Left ventricle myocardium inferior (tissue), 1 donor: ENCODE measurements at regions of chr1 and their contacts with region 1.

Region 1: GRCh38 chr1:211654838-211655787 is 20.3 kb downstream of the NEK2 start:
- DNase-seq: peak; percentile 88
- H3K4me3 ChIP-seq: peak overlapping the region; percentile 32
- H3K27ac ChIP-seq: no peak overlapping the region
- H3K4me1 ChIP-seq: no peaks in the 10 kb centered on the region
- H3K27me3 ChIP-seq: peaks cover 5% of the 10 kb centered on the region
- CTCF ChIP-seq: peak; percentile 96

Region 2: DNA sequence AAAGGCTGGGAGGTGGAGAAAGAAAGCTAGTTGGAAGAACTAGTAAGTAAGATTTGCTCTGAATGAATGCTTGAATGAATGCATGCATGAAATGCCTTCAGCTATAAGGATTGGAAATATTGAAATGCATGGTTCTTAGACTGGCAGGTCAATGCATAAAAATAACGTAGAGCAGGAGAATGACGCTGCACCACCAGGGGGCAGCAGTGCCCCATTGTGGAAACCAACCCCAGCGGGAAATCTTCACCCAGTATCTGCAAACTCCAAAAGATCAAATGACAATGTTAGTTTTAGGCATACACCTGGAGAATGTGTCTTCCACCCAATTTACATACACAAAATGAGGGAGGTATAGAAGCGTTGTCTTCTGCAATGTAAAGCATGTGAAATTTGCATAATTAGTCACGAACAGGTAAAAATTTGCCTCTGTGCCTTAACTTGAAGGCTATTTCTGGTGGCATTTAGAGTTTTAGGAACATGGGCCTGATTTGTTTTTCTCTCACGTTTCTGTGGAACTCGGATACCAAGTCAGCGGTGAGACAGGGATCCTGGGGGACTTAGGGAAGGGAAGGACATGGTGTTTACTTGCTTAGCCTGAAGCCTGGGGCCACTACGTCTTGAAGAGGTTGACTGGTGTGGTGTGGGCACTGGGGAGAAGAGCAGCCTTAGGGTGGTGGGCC is 1247.8 kb before region 1 on chr1:
- intact Hi-C with region 1: loop called (anchors 5 kb)
- DNase-seq: peak; percentile 57
- H3K4me3 ChIP-seq: no peak overlapping the region
- H3K27ac ChIP-seq: no peak overlapping the region
- H3K4me1 ChIP-seq: no peaks in the 10 kb centered on the region
- H3K27me3 ChIP-seq: no peaks in the 10 kb centered on the region
- CTCF ChIP-seq: peak; percentile 96

Region 3: GRCh38 chr1:211514030-211514754 is 140.9 kb before region 1 on chr1:
- intact Hi-C with region 1: loop called (anchors 10 kb)
- DNase-seq: peak; percentile 69
- H3K4me3 ChIP-seq: no peak overlapping the region
- H3K27ac ChIP-seq: no peak overlapping the region
- H3K4me1 ChIP-seq: peaks cover 13% of the 10 kb centered on the region
- H3K27me3 ChIP-seq: no peaks in the 10 kb centered on the region
- CTCF ChIP-seq: peak; percentile 83

Region 4: DNA sequence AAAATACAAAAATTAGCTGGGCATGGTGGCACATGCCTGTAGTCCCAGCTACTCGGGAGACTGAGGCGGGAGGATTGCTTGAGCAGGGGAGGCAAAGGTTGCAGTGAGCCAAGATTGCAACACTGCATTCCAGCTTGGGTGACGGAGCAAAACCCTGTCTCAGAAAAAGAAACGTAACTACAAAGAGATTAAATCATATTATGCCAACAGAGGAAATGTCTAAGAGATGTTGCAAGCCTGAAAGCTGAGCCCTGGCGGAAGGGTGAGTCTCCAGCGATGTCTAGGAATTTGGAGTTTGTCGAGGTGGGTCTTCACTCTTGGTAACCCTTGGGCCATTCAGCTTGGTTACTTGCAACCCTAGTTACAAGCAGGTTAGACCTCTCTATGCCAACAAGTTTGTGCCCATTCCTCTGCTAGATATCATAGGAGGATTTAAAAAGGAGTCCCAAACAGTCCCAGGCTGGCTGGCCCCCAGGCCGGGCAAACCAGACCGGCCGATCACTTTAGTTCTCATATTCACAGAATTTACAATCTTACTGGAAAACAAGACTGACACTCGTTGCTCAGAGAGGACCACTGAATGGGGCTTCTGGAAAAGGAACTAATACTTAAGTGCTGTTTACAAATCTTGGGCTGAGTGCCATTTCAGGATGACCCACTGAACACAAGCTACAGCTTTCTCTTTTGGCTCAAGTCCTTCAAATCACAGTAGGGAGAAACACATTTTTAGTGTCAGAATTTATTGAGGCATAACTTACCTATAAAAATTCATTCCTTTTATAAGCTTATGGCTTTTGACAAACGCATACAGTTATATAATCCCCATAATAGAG is 103.3 kb before region 1 on chr1:
- intact Hi-C with region 1: no loop called
- DNase-seq: no peak
- H3K4me3 ChIP-seq: no peak overlapping the region
- H3K27ac ChIP-seq: no peak overlapping the region
- H3K4me1 ChIP-seq: peaks cover 19% of the 10 kb centered on the region
- H3K27me3 ChIP-seq: no peaks in the 10 kb centered on the region
- CTCF ChIP-seq: no peak

Region 5: DNA sequence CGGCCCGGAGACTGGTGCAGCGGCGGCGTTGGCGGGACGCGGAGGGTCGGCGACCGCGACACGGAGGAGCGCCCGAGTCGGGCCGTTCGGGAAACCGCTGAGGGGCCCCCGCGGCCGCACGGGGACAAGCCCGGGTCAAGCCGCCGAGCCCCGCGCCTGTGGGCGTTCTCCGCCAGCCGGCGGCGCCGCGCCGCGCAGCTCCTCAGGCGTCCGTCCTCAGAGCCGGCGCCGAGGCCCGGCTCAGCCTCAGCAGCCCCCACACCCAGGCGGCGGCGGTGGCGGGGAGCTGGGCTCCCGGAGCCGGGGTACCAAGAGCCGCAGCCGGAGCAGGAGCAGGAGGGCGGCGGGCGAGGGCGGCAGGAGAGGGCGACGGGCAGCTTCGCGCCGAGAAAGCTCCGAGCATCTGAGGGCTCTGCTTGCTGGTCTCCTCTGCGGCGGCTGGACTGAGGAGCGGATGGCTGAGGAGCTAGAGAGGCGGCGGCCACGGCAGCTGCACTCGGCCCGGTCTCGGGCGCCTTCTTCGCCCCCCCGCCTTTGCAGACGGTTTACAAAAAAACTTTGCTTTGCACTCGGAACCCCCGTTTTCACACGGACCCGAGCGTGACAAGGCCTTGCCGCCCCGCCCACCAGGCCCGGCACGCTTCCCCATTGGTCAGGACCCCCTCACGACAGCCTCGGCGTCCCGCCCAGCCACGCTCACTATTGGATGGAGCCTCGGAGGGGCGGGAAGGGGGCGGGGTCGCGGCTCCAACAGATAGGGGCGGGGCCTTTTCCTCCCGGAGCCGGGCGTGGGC is 76.3 kb before region 1 on chr1 and contains the start of gene SLC30A1:
- intact Hi-C with region 1: loop called (anchors 5 kb)
- DNase-seq: peak; percentile 100
- H3K4me3 ChIP-seq: peak within 1 kb of the TSS; percentile 81
- H3K27ac ChIP-seq: peak within 1 kb of the TSS; percentile 99
- H3K4me1 ChIP-seq: peaks cover 71% of the 10 kb centered on the region
- H3K27me3 ChIP-seq: no peaks in the 10 kb centered on the region
- CTCF ChIP-seq: no peak
- total RNA-seq, gene SLC30A1: 11.5 TPM

Region 6: DNA sequence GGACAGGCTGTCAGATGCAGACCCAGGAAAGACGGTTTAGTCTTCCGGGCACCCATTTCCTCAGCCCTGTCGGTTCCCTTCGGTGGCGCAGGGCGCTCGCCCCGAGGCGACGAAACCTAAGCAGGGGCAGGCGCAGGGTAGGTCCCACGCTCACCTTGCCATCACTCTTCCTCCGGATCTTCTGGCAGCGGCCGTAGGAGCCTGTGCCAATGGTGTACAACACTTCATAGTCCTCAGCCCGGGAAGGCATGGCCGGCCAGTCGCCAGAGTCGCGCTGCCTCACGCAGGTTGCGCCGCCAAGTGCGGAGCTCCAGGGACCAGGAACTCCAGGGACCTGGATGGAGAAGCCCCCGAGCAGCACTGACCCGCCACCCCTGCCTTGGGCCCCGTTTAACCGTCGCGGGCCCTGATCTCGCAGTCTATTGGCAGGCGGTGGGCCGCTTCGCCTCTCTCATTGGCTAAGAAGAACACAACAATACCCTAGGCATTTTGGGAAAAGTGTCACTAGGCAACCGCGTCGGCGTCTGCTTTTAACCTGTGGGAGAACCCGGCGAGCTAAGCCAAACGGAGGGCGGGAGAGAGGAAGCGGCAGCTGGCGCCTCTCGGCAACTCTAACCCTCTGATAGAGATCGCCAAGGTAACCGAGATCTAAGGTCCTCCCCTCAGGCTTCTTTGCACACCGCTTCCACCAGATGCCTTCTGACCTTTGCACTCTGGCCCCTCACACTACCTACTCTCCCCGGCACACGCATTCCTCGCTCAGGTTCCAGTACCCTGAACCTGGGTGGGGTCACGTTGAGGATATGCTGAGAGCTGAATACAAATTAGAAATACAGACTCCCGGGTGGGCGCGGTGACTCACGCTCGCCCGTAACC is 20.4 kb after region 1 on chr1 and contains the start of gene NEK2:
- intact Hi-C with region 1: no loop called
- DNase-seq: peak; percentile 85
- H3K4me3 ChIP-seq: peak within 1 kb of the TSS; percentile 71
- H3K27ac ChIP-seq: no peak within 1 kb of the TSS
- H3K4me1 ChIP-seq: peaks cover 13% of the 10 kb centered on the region
- H3K27me3 ChIP-seq: no peaks in the 10 kb centered on the region
- CTCF ChIP-seq: no peak
- total RNA-seq, gene NEK2: 0.19 TPM